Activated naive CD4-positive, alpha-beta T cell treated with anti-CD3 and anti-CD28 coated beads for 36 hours (primary cell): ENCODE measurements at regions of chr9 and their contacts with region 1.

Region 1: DNA sequence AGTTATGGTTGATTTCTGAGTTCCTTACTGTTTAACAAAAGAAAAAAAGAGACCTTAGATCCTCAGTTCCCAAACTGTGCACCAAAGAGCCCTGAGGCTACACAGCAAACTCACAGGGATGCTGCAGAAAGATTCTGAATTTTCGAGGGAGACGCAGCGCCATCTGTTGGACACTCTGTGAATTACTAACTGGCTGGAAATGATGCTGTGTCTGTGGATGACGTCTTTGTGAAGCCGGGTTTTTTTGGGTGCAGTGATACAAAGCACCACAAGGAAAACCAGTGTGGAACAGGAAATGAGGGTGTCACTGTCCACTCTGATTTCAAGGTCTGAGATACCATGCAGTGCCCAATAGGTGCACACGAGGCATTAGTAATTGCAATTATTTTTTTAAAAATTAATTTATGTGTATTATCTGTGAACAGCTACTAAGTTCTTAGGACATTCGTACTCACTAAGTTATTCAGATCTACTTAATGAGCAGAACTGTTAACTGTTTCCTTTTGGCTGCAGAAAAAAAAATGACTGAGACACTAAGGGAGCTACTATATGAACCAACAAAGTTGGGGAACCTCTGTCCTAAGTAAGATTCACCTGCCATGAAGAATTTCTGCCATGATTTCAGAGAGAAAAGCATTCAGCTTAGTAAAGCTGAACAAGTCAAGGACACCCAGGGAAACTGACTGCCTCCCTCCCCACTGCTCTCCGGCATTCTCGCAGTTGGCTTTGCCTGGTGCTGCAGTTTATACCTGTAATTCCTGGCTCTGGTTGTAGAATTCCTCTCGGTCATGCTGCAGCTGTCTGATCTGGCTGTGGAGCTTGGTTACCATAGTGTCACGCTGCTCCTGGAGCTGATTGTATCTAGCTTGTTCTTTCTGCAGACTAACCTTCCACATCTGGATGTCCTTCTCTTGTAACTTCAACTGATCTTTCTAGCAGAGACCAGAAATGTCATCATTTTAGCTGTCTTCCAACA is 23.4 kb downstream of the SPACA9 start:
- DNase-seq: peak; percentile 92
- H3K4me3 Mint-ChIP-seq: no peak overlapping the region
- H3K27ac Mint-ChIP-seq: no peak overlapping the region
- H3K4me1 Mint-ChIP-seq: peaks cover 2% of the 10 kb centered on the region
- H3K27me3 Mint-ChIP-seq: no peaks in the 10 kb centered on the region

Region 2: DNA sequence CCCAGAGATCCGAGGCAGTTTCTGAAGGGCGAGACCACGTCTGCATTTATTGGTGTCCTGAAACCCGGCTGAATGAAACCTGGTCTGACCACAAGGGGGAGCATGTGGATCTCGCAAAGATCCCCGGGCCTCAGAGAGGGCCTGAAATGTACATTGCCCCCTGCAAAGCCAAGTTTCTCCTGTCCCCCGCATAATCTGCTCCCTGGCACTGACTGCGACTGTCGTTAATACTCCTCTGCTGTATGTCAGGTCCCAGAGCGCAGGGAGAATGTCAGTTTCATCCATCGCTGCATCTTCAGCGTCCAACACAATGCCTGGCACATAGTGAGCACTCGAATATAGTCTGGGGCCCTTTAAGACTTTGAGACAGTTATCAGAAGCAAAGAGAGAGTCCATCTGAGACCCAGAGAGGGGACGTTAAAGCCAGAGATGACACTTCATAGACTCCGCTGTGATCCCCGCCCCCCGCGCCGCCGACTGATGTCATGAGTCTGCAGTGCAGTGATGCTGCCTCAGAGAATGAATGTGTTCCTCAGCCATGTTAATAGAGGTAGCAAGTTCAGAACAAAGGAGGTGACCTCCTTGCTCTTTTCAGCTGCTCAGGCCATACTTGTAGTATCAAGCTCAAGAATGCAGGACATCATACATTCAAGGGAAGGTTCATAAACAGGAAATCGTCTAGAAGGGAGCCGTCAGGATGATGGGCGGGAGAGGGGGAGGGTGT is 394.2 kb before region 1 on chr9:
- CTCF ChIA-PET with region 1: interaction called, 3 read pairs
- intact Hi-C with region 1: loop called (anchors 5 kb)
- DNase-seq: peak; percentile 81
- H3K4me3 Mint-ChIP-seq: no peak overlapping the region
- H3K27ac Mint-ChIP-seq: no peak overlapping the region
- H3K4me1 Mint-ChIP-seq: peaks cover 2% of the 10 kb centered on the region
- H3K27me3 Mint-ChIP-seq: peaks cover 7% of the 10 kb centered on the region

Region 3: GRCh38 chr9:132849185-132849706 is 52.9 kb before region 1 on chr9:
- CTCF ChIA-PET with region 1: interaction called, 16 read pairs
- intact Hi-C with region 1: loop called (anchors 1 kb)
- DNase-seq: peak; percentile 31
- H3K4me3 Mint-ChIP-seq: peak overlapping the region; percentile 45
- H3K27ac Mint-ChIP-seq: peak overlapping the region; percentile 81
- H3K4me1 Mint-ChIP-seq: peaks cover 19% of the 10 kb centered on the region
- H3K27me3 Mint-ChIP-seq: no peaks in the 10 kb centered on the region

Region 4: GRCh38 chr9:132919614-132920268 is 17.6 kb after region 1 on chr9:
- CTCF ChIA-PET with region 1: interaction called, 10 read pairs
- intact Hi-C with region 1: no loop called
- DNase-seq: no peak
- H3K4me3 Mint-ChIP-seq: no peak overlapping the region
- H3K27ac Mint-ChIP-seq: no peak overlapping the region
- H3K4me1 Mint-ChIP-seq: no peaks in the 10 kb centered on the region
- H3K27me3 Mint-ChIP-seq: no peaks in the 10 kb centered on the region